ENCODE measurements at regions of chr19 and their contacts with region 1.

Region 1: GRCh38 chr19:43784981-43785808 is 4.4 kb upstream of the KCNN4 start:
- DNase-seq: peak; percentile 53
- ATAC-seq: peak; percentile 81

Region 2: DNA sequence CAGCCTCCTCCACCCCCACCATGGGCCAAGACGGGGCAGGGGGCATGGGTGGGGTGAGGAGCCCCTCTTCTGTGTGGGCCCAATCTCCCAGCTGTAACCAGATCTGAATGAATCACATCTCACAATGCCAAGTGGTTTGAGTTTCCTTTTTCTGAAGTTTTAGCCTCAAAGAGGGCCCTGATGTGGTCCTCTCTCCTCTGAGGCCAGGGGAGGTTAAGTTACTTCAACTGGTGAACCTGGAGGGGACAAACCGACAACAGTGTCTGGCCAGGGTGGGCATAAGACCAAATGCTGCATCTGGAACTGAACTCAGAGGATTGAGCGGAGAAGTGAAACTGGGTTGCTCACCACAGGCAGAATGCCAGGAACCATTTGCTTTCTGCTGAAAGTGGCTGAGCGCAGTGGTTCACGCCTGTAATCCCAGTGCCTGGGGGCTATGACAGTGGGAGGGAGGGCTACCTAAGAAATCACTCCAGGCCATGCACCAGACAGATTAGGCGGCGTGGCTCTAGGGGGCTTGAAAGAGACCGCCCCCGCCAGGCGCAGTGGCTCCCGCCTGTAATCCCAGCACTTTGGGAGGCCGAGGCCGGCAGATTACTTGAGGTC is 84.7 kb before region 1 on chr19:
- intact Hi-C with region 1: no loop called
- DNase-seq: peak; percentile 39
- ATAC-seq: peak; percentile 83

Region 3: GRCh38 chr19:43747557-43748204 is 37.5 kb before region 1 on chr19:
- intact Hi-C with region 1: loop called (anchors 5 kb)
- DNase-seq: no peak
- ATAC-seq: no peak